GM12878 (cell line): ENCODE measurements at regions of chr18 and their contacts with region 1.

Region 1: GRCh38 chr18:26090130-26091046 is at the start of gene SS18:
- DNase-seq: peak; percentile 76
- ATAC-seq: peak; percentile 89
- H3K4me3 ChIP-seq: peak within 1 kb of the TSS; percentile 85
- H3K27ac ChIP-seq: peak within 1 kb of the TSS; percentile 98
- H3K4me1 ChIP-seq: peaks cover 3% of the 10 kb centered on the region; the same call in 1 of the 2 replicates
- H3K27me3 ChIP-seq: no peaks in the 10 kb centered on the region
- CTCF ChIP-seq: no peak
- EP300 ChIP-seq: 0 out of 4 replicates have a peak, but pooled peaks have one; percentile 9 to 46
- POLR2A ChIP-seq: peak; percentile 98
- RAD21 ChIP-seq: no peak
- polyA plus RNA-seq, gene SS18: 16.6 to 34.4 TPM

Region 2: DNA sequence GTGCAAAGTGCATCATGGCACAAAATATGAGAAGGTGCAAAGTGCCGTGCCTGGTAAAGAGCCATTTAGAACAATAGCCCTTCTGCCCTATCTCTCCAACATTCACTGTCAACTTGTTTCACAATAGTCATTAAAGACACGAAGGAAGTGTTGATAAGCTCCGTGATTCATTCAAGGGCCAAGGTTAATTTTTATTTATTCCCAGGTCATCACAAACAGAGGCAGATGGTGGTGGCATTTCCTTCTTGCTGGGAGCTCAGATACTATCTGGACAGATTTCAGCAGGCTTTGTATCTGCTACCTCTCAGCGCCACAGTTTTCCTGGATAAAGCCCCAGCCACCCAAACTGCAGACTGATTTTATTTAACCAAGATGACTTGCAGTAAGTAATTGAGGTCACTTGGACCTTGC is 1047.7 kb before region 1 on chr18:
- CTCF ChIA-PET with region 1: no interaction called
- POLR2A ChIA-PET with region 1: no interaction called
- RAD21 ChIA-PET with region 1: no interaction called
- SMC1A ChIA-PET with region 1: no interaction called
- in situ Hi-C with region 1: no loop called
- intact Hi-C with region 1: no loop called
- DNase-seq: no peak
- ATAC-seq: no peak
- H3K4me3 ChIP-seq: no peak overlapping the region
- H3K27ac ChIP-seq: no peak overlapping the region
- H3K4me1 ChIP-seq: no peaks in the 10 kb centered on the region
- H3K27me3 ChIP-seq: no peaks in the 10 kb centered on the region; a peak in 1 of 4 replicates
- CTCF ChIP-seq: no peak
- EP300 ChIP-seq: no peak
- POLR2A ChIP-seq: no peak
- RAD21 ChIP-seq: no peak

Region 3: DNA sequence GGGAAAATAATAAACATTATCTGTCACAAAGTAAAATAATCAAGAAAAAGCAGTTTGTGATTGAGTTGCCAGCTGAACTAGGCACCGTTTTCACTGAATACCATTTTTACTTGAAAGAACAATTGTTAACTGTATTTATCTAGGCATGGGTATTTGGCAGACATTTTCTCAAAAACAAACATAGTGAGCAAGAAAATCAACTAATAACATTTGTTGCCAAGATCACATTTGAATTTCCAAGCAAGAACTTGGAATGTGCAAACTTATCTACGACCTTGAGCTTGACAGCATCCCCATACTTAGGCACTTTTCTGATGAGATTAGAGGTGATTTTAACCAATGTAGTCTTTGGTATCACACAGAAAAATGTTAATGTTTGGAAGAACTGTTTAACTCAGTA is 16.6 kb before region 1 on chr18:
- CTCF ChIA-PET with region 1: interaction called, 3 read pairs
- POLR2A ChIA-PET with region 1: interaction called, 3 read pairs
- RAD21 ChIA-PET with region 1: interaction called, 3 read pairs
- SMC1A ChIA-PET with region 1: interaction called, 18 read pairs
- in situ Hi-C with region 1: no loop called
- intact Hi-C with region 1: no loop called
- DNase-seq: no peak
- ATAC-seq: no peak
- H3K4me3 ChIP-seq: no peak overlapping the region
- H3K27ac ChIP-seq: no peak overlapping the region
- H3K4me1 ChIP-seq: no peaks in the 10 kb centered on the region
- H3K27me3 ChIP-seq: no peaks in the 10 kb centered on the region
- CTCF ChIP-seq: no peak
- EP300 ChIP-seq: no peak
- POLR2A ChIP-seq: no peak
- RAD21 ChIP-seq: no peak

Region 4: DNA sequence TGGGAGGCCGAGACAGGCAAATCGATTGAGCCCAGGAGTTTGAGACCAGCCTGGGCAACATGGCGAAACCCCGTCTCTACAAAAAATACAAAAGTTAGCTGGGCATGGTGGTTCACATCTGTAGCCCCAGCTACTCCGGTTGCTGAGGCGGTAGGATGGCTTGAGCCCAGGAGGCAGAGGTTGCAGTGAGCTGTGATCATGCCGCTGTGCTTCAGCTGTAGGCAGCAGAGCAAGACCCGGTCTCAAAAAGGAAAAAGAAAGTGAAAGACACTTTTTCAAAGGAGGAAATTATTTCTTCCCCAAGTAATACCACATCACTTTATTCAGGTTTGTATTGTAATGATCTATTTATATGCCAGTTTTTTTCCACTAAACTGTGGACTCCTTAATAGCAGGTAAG is 100.1 kb after region 1 on chr18:
- CTCF ChIA-PET with region 1: interaction called, 3 read pairs
- POLR2A ChIA-PET with region 1: interaction called, 3 read pairs
- RAD21 ChIA-PET with region 1: interaction called, 3 read pairs
- SMC1A ChIA-PET with region 1: interaction called, 5 read pairs
- in situ Hi-C with region 1: no loop called
- intact Hi-C with region 1: loop called (anchors 5 kb)
- DNase-seq: peak; percentile 74
- ATAC-seq: peak; percentile 94
- H3K4me3 ChIP-seq: peak overlapping the region; percentile 58
- H3K27ac ChIP-seq: peak overlapping the region; percentile 77
- H3K4me1 ChIP-seq: peaks cover 12% of the 10 kb centered on the region
- H3K27me3 ChIP-seq: no peaks in the 10 kb centered on the region
- CTCF ChIP-seq: no peak
- EP300 ChIP-seq: peak in 1 of 2 experiments; percentile 30; a peak in 1 of 4 replicates
- POLR2A ChIP-seq: 0 out of 2 replicates have a peak, but pooled peaks have one; percentile 38
- RAD21 ChIP-seq: no peak

Region 5: DNA sequence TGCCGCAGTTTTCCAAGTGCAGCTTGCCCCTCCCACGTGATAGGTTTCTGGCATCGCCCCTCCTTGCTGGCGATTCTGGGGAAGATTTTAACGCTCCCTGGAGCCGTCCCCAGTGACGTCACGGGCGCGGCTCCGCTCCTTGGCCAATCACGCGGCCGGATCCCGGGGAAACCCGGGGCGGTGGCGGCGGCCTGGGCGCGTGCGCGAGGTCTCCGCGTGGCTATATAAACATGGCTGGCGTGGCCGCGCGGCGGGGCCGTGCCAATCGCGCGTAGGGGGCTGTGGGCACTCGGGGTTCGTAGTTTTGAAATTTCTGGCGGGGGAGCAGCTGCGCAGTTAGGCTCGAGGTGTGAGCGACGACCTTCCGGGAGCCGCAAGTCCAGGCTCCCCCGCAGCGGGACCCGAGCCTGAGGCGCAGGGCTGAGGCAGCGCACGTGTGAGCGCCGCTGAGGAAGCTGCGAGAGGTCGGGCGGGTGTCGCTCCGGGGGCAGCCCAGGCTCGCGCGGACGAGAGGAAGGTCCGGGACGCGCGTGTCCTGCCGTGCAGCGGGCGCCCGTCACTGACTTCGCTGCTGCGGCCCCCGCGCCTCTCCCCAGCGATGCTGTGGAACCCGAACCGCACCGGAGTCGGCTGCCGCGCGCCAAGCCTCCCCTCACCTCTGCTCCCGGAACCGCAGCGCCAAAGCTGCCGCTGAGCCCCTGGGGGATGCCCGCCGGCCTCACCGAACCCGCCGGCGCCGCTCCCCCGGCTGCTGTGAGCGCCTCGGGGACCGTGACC is 136.0 kb after region 1 on chr18 and contains the start of gene TAF4B:
- CTCF ChIA-PET with region 1: interaction called, 4 read pairs
- POLR2A ChIA-PET with region 1: interaction called, 3 read pairs
- RAD21 ChIA-PET with region 1: interaction called, 14 read pairs
- SMC1A ChIA-PET with region 1: no interaction called
- in situ Hi-C with region 1: no loop called
- intact Hi-C with region 1: loop called (anchors 5 kb)
- DNase-seq: peak; percentile 68
- ATAC-seq: peak; percentile 84
- H3K4me3 ChIP-seq: peak within 1 kb of the TSS; percentile 72
- H3K27ac ChIP-seq: peak within 1 kb of the TSS; percentile 54
- H3K4me1 ChIP-seq: no peaks in the 10 kb centered on the region
- H3K27me3 ChIP-seq: no peaks in the 10 kb centered on the region
- CTCF ChIP-seq: no peak
- EP300 ChIP-seq: no peak
- POLR2A ChIP-seq: peak; percentile 88
- RAD21 ChIP-seq: no peak
- polyA plus RNA-seq, gene TAF4B: 2.3 to 4.4 TPM

Region 6: DNA sequence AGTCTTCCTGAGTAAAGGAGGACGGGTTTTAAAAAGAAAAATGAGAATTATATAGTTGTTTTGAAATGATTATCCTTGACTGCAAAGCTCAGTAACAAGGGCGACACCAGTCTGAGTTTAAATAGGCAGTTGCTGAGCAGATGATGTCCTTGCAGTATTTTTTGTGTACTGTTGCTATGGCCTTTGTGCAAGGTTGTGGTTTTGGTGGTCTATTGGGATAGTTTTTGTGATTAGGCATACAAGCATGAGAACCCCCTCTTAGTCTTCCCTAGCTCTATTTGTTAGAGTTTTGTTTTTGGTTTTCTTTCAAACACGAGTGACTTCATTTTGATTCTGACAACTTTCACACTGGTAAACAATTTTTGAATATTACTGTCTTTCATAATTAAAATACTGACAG is 200.0 kb after region 1 on chr18:
- CTCF ChIA-PET with region 1: no interaction called
- POLR2A ChIA-PET with region 1: no interaction called
- RAD21 ChIA-PET with region 1: interaction called, 3 read pairs
- SMC1A ChIA-PET with region 1: interaction called, 3 read pairs
- in situ Hi-C with region 1: no loop called
- intact Hi-C with region 1: loop called (anchors 5 kb)
- DNase-seq: no peak
- ATAC-seq: peak; percentile 78
- H3K4me3 ChIP-seq: no peak overlapping the region
- H3K27ac ChIP-seq: no peak overlapping the region
- H3K4me1 ChIP-seq: no peaks in the 10 kb centered on the region
- H3K27me3 ChIP-seq: no peaks in the 10 kb centered on the region
- CTCF ChIP-seq: no peak
- EP300 ChIP-seq: no peak
- POLR2A ChIP-seq: no peak
- RAD21 ChIP-seq: no peak